Motor neuron (in vitro differentiated cells): ENCODE measurements at regions of chr18 and their contacts with region 1.

Region 1: GRCh38 chr18:36693931-36694620 is 134.7 kb downstream of the TPGS2 start:
- ATAC-seq: peak in 6 of 8 experiments; percentile 54 to 100 (median 76)
- H3K4me3 ChIP-seq: no peak overlapping the region
- H3K27ac ChIP-seq: no peak overlapping the region
- H3K4me1 ChIP-seq: no peaks in the 10 kb centered on the region

Region 2: DNA sequence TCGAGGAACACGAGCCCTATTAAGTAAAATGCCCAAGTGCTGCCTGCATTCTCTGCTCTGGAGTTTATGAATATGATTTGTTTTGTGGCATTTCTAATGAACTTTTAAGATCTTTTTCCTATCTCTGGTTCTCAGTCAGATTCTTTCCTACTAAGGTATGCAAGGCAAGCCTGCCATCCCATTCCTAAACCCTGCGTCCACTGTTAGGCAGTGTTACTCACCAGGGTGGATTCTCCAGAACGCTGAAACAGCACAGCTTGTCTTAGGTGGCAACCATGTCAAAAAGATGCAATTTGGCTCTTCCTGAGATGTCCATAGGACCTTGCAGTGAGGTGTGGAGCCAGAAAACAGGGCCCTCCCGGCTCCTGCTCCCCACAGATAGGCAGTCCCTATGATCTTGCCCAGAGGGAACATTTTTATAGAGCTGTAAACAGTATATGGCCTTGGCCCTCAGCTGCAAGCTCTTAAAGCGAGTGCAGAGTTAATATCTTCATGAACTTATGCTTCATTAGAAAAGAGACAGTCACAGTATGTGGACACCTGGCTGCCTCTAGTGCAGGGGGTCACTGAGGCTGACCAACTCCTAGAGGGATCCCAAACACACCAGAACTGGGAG is 50.3 kb after region 1 on chr18:
- in situ Hi-C with region 1: loop called in 1 of 9 experiments (anchors 10 kb)
- ATAC-seq: no peak
- H3K4me3 ChIP-seq: no peak overlapping the region
- H3K27ac ChIP-seq: no peak overlapping the region
- H3K4me1 ChIP-seq: no peaks in the 10 kb centered on the region